Mammary epithelial cell (primary cell): ENCODE measurements at regions of chr19 and their contacts with region 1.

Region 1: DNA sequence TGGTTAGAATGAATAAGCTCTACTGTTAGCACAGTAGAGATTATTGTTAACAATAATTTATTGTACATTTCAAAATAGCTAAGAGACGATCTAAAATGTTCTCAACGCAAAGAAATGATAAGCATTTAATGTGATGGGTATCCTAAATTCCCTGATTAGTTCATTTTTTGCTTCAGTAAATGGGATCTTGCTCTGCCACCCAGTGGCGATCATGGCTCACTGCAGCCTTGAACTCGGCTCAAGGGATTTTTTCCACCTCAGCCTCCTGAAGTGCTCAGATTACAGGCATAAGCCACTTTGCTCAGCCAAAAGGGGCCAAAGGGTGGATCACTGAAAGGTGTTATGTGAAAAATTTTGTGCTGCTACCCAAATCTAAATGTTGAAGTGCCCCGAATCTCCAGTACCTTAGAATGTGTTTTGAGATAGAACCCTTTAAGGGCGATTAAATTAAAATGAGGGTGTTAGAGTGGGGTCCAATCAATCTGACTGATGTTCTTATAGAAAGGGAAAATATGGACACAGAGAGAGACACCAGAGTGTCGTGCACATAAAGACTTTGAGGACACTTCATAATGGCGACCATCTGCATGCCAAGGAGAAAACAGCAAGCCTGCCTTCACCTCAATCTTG is 31.5 kb upstream of the ZNF766 start:
- DNase-seq: peak; percentile 40
- H3K4me3 ChIP-seq: no peak overlapping the region
- H3K27ac ChIP-seq: no peak overlapping the region
- H3K4me1 ChIP-seq: no peaks in the 10 kb centered on the region
- H3K27me3 ChIP-seq: no peaks in the 10 kb centered on the region
- CTCF ChIP-seq: peak; percentile 78 to 87

Region 2: DNA sequence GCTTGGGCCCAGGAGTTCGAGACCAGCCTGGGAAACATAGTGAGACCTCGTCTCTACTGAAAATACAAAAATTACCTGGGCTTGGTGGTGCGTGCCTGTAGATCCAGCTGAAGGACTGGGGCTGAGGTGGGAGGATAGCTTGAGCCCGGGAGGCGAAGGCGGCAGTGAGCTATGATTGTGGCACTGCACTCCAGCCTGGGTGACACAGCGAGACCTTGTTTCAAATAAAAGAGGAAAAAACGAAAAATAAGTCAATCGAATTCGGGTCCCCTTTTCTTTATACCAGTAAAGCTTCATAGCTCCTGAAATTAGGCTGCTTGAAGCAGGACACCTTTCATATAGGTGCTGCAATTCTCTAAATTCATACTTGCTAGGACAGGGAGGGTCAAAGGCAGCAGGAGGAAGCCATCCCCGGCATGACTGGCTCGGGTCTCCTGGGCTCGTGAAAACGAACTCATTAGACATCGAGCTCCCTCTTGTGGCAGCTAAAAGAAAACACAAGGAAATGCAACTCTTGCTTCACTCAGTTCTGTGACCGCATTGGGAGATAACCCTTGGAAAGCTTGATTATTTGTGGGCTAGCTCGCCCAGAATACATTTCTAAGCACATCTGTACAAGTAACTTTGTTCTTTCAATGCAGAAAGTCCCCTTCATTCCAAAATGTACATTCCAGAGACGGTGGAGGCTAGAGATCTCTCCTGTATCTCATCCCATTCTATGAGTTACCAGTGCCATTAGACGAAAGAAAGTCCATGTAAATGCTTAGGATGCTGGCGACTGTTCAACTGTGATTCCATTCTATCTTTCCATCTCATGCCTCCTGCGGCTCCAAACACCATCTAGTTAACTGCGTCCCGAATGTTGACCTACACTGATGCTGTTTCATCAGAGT is 460.1 kb before region 1 on chr19:
- CTCF ChIA-PET with region 1: no interaction called
- dilution Hi-C with region 1: no loop called
- in situ Hi-C with region 1: no loop called
- intact Hi-C with region 1: loop called (anchors 2 kb)
- DNase-seq: peak; percentile 68
- H3K4me3 ChIP-seq: no peak overlapping the region
- H3K27ac ChIP-seq: no peak overlapping the region
- H3K4me1 ChIP-seq: no peaks in the 10 kb centered on the region
- H3K27me3 ChIP-seq: no peaks in the 10 kb centered on the region
- CTCF ChIP-seq: peak; percentile 62 to 72

Region 3: GRCh38 chr19:51887522-51888498 is 350.1 kb before region 1 on chr19 and contains the start of gene ZNF577:
- CTCF ChIA-PET with region 1: no interaction called
- dilution Hi-C with region 1: no loop called
- in situ Hi-C with region 1: no loop called
- intact Hi-C with region 1: loop called (anchors 5 kb)
- DNase-seq: peak; percentile 93
- H3K4me3 ChIP-seq: peak within 1 kb of the TSS; percentile 53 to 78 (median 66)
- H3K27ac ChIP-seq: peak within 1 kb of the TSS; percentile 43
- H3K4me1 ChIP-seq: no peaks in the 10 kb centered on the region
- H3K27me3 ChIP-seq: no peaks in the 10 kb centered on the region
- CTCF ChIP-seq: no peak
- total RNA-seq, gene ZNF577: 6.9 to 7.2 TPM

Region 4: GRCh38 chr19:52028027-52028779 is 209.7 kb before region 1 on chr19 and contains the start of gene ZNF614:
- CTCF ChIA-PET with region 1: no interaction called
- dilution Hi-C with region 1: no loop called
- in situ Hi-C with region 1: no loop called
- intact Hi-C with region 1: loop called (anchors 10 kb)
- DNase-seq: peak; percentile 88
- H3K4me3 ChIP-seq: peak within 1 kb of the TSS; percentile 73 to 93 (median 84)
- H3K27ac ChIP-seq: peak within 1 kb of the TSS; percentile 85
- H3K4me1 ChIP-seq: no peaks in the 10 kb centered on the region
- H3K27me3 ChIP-seq: no peaks in the 10 kb centered on the region
- CTCF ChIP-seq: no peak
- total RNA-seq, gene ZNF614: 8.7 to 9.1 TPM